ENCODE measurements at regions of chr11 and their contacts with region 1.

Region 1: DNA sequence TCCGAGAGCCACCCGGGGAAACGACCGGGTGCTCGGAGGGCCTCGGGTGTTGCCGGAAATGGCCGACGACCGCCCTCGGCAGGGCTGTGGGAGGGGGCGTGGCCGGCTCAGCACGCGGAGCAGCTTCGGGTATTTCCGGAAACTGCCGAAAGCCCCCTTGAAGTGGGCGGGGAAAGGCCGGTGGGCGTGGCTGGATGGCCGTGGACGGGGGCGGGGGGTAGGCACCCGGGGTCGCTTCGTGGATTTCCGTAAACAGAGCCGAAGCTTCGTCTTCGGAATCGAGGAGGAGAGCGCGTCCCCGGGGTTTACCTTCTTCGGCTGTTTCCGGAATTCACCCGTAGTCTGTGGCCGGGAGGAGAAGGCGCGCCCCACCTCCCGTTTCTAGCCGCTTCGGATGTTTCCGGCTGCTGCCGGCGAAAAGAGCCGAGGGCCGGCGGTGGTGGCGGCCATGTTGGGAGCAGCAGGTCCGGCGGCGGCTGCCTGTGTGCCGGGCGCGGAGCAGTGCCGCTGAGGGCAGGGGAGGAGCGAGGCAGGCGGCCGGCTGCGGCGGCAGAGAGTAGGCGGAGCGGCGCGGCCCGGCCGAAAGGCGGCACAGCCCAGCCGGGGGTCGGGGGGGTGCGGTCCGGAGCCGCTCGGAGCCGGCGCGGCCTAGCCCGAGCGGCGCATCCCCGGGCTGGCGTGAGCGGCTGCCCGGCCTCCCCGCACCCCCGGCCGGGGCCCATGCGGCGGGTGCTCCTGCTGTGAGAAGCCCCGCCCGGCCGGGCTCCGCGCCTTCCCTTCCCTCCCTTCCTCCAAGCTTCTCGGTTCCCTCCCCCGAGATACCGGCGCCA is at the start of gene MARK2:
- DNase-seq: peak; percentile 100
- H3K4me3 Mint-ChIP-seq: peak within 1 kb of the TSS; percentile 89
- H3K27ac Mint-ChIP-seq: peak within 1 kb of the TSS; percentile 81
- H3K4me1 Mint-ChIP-seq: peaks cover 45% of the 10 kb centered on the region
- H3K27me3 Mint-ChIP-seq: no peaks in the 10 kb centered on the region
- total RNA-seq, gene MARK2: 20.0 to 29.0 TPM

Region 2: DNA sequence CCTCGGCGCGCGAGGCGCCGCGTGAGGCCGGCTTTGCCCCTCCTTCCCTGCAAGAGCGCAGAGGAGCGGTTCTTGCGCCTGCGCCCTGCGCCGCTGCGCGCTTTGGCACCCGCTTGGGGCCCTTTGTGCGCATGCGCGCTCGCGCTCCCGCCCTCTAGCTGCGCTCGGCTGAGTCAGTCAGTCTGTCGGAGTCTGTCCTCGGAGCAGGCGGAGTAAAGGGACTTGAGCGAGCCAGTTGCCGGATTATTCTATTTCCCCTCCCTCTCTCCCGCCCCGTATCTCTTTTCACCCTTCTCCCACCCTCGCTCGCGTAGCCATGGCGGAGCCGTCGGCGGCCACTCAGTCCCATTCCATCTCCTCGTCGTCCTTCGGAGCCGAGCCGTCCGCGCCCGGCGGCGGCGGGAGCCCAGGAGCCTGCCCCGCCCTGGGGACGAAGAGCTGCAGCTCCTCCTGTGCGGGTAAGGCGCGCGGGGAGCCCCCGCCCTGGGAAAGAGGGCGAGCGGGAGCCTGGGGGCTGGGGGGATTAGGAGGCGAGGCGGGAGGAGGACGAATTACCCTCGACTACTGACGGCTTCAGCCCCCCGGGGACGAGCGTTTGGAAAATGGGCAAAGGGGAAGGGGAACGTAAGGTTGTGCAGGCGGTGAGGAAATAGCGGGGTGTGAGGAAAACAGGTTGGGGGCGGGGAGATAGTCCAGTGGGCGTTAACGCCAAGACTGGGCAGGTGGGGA is 157.4 kb before region 1 on chr11 and contains the start of gene RTN3:
- CTCF ChIA-PET with region 1: no interaction called
- POLR2A ChIA-PET with region 1: no interaction called
- intact Hi-C with region 1: loop called (anchors 5 kb)
- DNase-seq: peak; percentile 99
- H3K4me3 Mint-ChIP-seq: peak within 1 kb of the TSS; percentile 87
- H3K27ac Mint-ChIP-seq: peak within 1 kb of the TSS; percentile 78
- H3K4me1 Mint-ChIP-seq: peaks cover 23% of the 10 kb centered on the region
- H3K27me3 Mint-ChIP-seq: no peaks in the 10 kb centered on the region
- total RNA-seq, gene RTN3: 54.4 to 58.4 TPM

Region 3: DNA sequence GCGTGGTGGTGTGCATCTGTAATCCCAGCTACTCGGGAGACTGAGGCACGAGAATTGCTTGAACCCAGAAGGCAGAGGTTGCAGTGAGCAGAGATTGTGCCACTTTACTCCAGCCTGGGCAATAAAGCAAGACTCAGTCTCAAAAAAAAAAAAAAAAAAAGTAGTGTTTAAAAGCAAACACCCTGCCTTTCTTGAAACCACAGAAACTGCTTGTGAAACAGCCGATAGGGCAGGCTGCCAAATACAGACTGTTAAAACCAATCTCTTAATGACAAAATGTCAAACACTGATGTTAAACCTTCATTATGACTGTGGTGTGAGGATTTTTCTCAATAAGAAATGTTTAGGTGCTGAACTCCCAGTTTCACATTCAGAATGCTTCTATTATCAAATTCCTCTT is 27.3 kb after region 1 on chr11:
- CTCF ChIA-PET with region 1: interaction called, 9 read pairs
- POLR2A ChIA-PET with region 1: interaction called, 3 read pairs
- intact Hi-C with region 1: loop called (anchors 1 kb)
- DNase-seq: peak; percentile 91
- H3K4me3 Mint-ChIP-seq: peak overlapping the region; percentile 23
- H3K27ac Mint-ChIP-seq: peak overlapping the region; percentile 67
- H3K4me1 Mint-ChIP-seq: peaks cover 75% of the 10 kb centered on the region
- H3K27me3 Mint-ChIP-seq: no peaks in the 10 kb centered on the region

Region 4: GRCh38 chr11:63916837-63917691 is 78.2 kb after region 1 on chr11 and contains the start of gene RCOR2:
- CTCF ChIA-PET with region 1: interaction called, 36 read pairs
- POLR2A ChIA-PET with region 1: no interaction called
- intact Hi-C with region 1: loop called (anchors 2 kb)
- DNase-seq: peak; percentile 71
- H3K4me3 Mint-ChIP-seq: peak within 1 kb of the TSS; percentile 76
- H3K27ac Mint-ChIP-seq: no peak within 1 kb of the TSS
- H3K4me1 Mint-ChIP-seq: peaks cover 16% of the 10 kb centered on the region
- H3K27me3 Mint-ChIP-seq: no peaks in the 10 kb centered on the region
- total RNA-seq, gene RCOR2: 0.21 to 0.27 TPM

Region 5: DNA sequence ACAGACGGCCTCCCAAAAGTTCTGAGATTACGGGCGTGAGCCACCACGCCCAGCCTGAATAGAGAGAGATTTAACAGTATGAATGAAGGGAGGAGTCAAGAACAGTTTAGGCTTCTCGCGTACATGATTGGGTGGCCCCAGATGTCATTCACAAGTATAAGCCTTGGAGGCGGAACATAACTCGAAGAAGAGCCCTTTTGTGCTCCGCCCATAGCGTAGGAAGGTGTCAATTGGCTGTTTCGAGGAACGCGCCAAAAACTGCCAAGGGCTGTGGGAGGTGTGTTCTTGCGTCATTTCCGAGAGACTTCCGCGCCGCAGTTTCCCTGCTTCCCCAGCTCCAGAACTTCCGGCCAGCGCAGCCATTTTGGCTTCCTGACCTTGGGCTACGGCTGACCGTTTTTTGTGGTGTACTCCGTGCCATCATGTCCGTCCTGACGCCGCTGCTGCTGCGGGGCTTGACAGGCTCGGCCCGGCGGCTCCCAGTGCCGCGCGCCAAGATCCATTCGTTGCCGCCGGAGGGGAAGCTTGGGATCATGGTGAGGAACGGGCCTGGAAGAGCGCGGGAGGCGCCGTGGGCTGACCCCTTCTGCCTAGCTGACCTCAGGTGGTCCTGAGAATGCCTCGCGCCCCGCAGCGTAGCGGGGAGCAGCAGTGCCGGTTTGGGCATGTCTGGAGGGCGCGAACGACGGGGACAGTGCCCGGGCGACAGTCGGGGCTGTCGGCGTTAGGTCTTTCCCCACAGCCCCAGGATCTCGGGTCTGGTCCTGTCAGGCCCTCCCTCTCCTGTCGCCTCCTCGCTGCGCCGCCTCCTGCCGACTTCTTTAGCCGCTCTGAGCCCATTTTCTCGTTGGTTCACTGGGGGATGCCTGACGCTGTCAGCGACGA is 135.6 kb after region 1 on chr11 and contains the start of gene COX8A:
- CTCF ChIA-PET with region 1: interaction called, 7 read pairs
- POLR2A ChIA-PET with region 1: interaction called, 4 read pairs
- intact Hi-C with region 1: loop called (anchors 1 kb)
- DNase-seq: peak; percentile 98
- H3K4me3 Mint-ChIP-seq: peak within 1 kb of the TSS; percentile 100
- H3K27ac Mint-ChIP-seq: peak within 1 kb of the TSS; percentile 98
- H3K4me1 Mint-ChIP-seq: peaks cover 21% of the 10 kb centered on the region
- H3K27me3 Mint-ChIP-seq: no peaks in the 10 kb centered on the region
- total RNA-seq, gene COX8A: 559 to 581 TPM

Region 6: DNA sequence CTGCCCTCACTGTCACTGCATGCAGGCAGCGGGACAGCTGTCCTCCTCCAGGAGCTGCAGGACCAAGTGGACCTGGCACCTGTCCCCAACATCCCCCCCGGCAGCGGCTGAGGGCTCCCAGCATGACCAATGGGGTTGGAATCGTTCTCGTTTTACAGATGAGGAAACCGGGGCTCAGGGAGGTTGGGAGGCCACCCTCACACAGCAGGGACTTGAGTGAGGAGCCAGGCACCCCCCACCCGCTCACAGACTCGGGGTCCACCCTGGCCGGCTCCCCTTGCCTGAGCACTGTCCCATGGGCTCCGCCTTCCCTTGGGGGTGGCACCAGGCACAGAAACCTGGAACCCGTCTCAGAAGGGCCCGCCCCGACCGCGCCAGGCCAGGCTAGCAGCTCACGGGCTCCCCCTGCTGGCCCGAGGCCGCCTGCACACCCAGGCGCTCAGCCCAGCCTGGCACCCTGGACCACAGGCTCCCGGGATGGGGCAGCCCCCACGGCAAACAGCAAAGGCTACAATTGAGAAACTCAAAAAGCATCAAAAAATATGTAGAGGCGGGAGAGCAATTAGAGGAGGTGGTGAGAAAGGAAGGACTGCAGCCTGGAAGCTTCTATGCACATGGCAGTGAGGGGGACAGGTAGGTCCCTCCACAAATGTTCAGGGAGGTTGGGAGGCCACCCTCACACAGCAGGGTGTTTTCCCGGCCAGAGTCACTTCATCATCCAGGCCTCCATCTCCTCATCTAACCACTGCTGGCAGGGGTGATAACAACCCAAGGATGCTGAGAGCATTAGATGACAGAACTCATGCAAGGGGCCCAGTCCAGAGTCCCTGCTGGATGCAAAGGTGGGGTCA is 314.2 kb after region 1 on chr11:
- CTCF ChIA-PET with region 1: interaction called, 41 read pairs
- POLR2A ChIA-PET with region 1: no interaction called
- intact Hi-C with region 1: loop called (anchors 1 kb)
- DNase-seq: peak; percentile 78
- H3K4me3 Mint-ChIP-seq: no peak overlapping the region
- H3K27ac Mint-ChIP-seq: no peak overlapping the region
- H3K4me1 Mint-ChIP-seq: peaks cover 3% of the 10 kb centered on the region
- H3K27me3 Mint-ChIP-seq: no peaks in the 10 kb centered on the region

Measured in activated CD4-positive, alpha-beta memory T cell treated with anti-CD3 and anti-CD28 coated beads for 36 hours (primary cell).